Heart right ventricle (tissue), 16 donors: ENCODE measurements at regions of chr4 and their contacts with region 1.

Region 1: GRCh38 chr4:147741190-147741785 is 9.4 kb downstream of the ARHGAP10 start:
- DNase-seq: no peak
- ATAC-seq: no peak
- H3K4me3 ChIP-seq: no peak overlapping the region
- H3K27ac ChIP-seq: no peak overlapping the region
- H3K4me1 ChIP-seq: peaks cover 0 to 78% (median 39%) of the 10 kb centered on the region in 9 donors
- H3K27me3 ChIP-seq: no peaks in the 10 kb centered on the region
- CTCF ChIP-seq: no peak

Region 2: DNA sequence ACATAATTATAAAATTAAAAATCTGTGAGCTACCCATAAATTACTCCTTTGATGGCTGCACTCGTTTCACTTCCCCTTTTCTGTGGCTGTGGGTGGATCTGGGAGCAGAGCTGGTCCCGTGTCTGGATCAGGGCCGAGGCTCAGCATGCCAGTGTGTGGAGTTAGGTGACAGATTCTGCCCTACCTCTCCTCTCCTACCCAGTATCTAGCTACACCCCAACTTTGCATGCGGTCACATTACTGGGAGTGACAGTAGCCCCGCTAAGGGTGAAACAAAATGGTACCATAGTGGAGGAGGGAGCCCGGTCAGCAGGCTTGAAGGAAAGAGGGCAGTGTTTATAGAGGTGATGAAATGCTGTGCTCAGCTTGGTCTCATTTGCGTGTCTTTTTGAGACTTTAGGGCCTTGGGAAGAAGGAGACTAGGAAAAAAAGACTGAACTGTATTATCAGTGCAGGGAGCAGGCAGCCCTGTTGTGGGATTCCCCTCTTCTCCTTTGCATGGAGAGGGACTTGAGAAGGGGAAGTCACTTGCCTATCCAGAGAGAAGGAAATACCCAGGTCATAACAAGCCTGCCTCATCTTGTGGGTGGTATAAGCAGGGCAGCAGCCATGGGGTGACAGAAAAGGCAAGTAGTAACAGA is 39.0 kb after region 1 on chr4:
- intact Hi-C with region 1: loop called in 2 of 10 experiments (anchors 2 to 10 kb)
- DNase-seq: no peak
- ATAC-seq: peak; percentile 13 to 59 (median 50)
- H3K4me3 ChIP-seq: peak overlapping the region in 1 of 10 donors; percentile 27
- H3K27ac ChIP-seq: peak overlapping the region in 3 of 10 donors; percentile 43 to 85 (median 58)
- H3K4me1 ChIP-seq: peaks cover 6 to 71% (median 51%) of the 10 kb centered on the region in 9 donors
- H3K27me3 ChIP-seq: no peaks in the 10 kb centered on the region
- CTCF ChIP-seq: no peak